Activated naive CD4-positive, alpha-beta T cell treated with anti-CD3 and anti-CD28 coated beads for 36 hours (primary cell): ENCODE measurements at regions of chr5 and their contacts with region 1.

Region 1: DNA sequence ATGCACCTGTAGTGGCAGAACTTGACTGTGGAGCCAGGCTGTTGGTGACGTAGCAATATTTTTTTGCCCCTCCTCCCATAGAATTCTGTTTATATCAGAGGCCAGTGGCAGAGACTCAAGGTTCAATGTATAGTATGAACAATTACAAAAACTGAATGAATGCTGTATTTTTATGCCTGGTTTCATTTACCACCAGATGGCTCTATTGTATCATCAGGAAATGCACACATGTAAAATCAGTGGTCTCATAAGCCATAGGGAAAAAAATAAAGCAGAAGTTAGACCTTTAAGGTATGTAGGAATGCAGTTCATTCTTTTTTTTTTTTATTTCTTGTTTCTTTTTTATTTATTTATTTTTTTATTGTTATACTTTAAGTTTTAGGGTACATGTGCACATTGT is 43.6 kb downstream of the CCDC192 start:
- DNase-seq: no peak
- H3K4me3 Mint-ChIP-seq: no peak overlapping the region
- H3K27ac Mint-ChIP-seq: no peak overlapping the region
- H3K4me1 Mint-ChIP-seq: no peaks in the 10 kb centered on the region
- H3K27me3 Mint-ChIP-seq: peaks cover 7% of the 10 kb centered on the region

Region 2: GRCh38 chr5:127428748-127429147 is 318.0 kb before region 1 on chr5:
- CTCF ChIA-PET with region 1: no interaction called
- intact Hi-C with region 1: no loop called
- DNase-seq: no peak
- H3K4me3 Mint-ChIP-seq: no peak overlapping the region
- H3K27ac Mint-ChIP-seq: no peak overlapping the region
- H3K4me1 Mint-ChIP-seq: no peaks in the 10 kb centered on the region
- H3K27me3 Mint-ChIP-seq: peaks cover 2% of the 10 kb centered on the region

Region 3: GRCh38 chr5:127732963-127733362 is 13.8 kb before region 1 on chr5:
- CTCF ChIA-PET with region 1: no interaction called
- intact Hi-C with region 1: no loop called
- DNase-seq: no peak
- H3K4me3 Mint-ChIP-seq: no peak overlapping the region
- H3K27ac Mint-ChIP-seq: no peak overlapping the region
- H3K4me1 Mint-ChIP-seq: no peaks in the 10 kb centered on the region
- H3K27me3 Mint-ChIP-seq: no peaks in the 10 kb centered on the region

Region 4: GRCh38 chr5:127813633-127814587 is 67.2 kb after region 1 on chr5:
- CTCF ChIA-PET with region 1: no interaction called
- intact Hi-C with region 1: no loop called
- DNase-seq: no peak
- H3K4me3 Mint-ChIP-seq: no peak overlapping the region
- H3K27ac Mint-ChIP-seq: no peak overlapping the region
- H3K4me1 Mint-ChIP-seq: no peaks in the 10 kb centered on the region
- H3K27me3 Mint-ChIP-seq: peaks cover 23% of the 10 kb centered on the region

Region 5: GRCh38 chr5:128498844-128499455 is 752.2 kb after region 1 on chr5:
- CTCF ChIA-PET with region 1: no interaction called
- intact Hi-C with region 1: loop called (anchors 5 kb)
- DNase-seq: no peak
- H3K4me3 Mint-ChIP-seq: no peak overlapping the region
- H3K27ac Mint-ChIP-seq: no peak overlapping the region
- H3K4me1 Mint-ChIP-seq: no peaks in the 10 kb centered on the region
- H3K27me3 Mint-ChIP-seq: no peaks in the 10 kb centered on the region

Region 6: DNA sequence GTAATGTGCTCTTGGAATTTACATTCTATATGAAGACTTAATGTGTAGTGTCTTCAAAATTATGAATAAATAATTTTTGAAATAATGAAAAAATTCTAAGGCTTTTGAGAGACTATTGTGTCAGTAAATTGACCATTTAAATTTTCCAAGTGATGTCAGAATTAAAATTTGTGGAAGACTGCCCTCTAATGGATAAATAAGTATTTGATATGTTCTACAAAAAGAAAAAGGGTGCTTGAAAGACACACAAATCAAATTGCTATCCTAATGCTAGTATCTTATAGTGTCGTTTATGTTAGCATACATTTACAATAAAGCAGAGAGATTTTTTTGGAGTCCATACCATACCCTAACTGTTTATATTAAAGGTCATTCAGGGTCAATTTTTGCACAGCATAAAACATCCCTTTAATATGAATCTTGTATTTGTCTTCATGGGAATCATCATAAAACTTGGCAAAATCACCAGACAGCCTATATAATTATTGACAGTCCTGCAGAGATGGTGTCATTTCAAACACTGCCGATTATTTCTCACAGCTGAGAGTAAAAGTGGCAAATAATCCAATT is 1097.7 kb after region 1 on chr5:
- CTCF ChIA-PET with region 1: no interaction called
- intact Hi-C with region 1: loop called (anchors 5 kb)
- DNase-seq: no peak
- H3K4me3 Mint-ChIP-seq: no peak overlapping the region
- H3K27ac Mint-ChIP-seq: no peak overlapping the region
- H3K4me1 Mint-ChIP-seq: no peaks in the 10 kb centered on the region
- H3K27me3 Mint-ChIP-seq: no peaks in the 10 kb centered on the region